HAP-1 (cell line): ENCODE measurements at regions of chr1 and their contacts with region 1.

Region 1: GRCh38 chr1:156728597-156729462 is at the start of gene ISG20L2:
- DNase-seq: peak; percentile 96 to 97
- H3K4me3 ChIP-seq: peak within 1 kb of the TSS; percentile 82
- H3K4me1 ChIP-seq: peaks cover 14% of the 10 kb centered on the region
- H3K27me3 ChIP-seq: no peaks in the 10 kb centered on the region

Region 2: DNA sequence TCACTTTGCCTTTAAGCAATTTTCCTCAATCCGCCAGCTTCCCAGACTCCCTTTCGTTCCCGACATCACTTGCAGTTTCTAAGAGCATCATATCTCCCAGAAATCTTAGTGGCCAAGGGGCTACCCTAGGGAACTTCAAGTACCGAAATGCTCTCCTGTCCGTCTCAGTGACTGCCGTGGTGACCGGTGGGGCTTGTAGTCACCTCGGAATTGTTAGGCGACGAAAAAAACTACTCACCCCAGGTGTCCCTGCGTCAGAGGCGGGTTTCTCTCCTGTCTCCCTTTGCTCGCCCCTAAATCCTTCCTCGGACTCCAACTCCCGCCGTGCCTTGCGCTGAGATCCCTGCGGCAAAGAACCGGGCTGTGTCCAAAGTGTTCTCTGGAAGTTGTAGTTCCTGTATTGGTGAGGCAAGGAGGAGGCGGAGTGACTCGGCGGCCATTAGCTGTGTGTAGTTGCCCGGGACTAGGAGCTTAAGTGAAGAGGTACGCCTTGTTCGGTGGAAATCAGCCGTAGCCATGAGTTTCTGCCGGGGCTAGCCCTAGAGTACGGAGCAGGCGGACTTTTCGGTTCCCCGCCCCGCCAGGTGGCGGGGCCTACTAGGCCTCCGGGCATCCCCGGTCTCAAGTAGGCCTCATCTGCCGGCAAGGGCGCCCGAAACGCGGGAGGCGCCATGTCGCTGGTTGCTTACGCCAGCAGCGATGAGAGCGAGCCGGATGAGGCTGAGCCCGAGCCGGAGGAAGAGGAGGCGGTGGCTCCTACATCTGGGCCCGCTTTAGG is 38.5 kb after region 1 on chr1 and contains the start of gene PRCC:
- in situ Hi-C with region 1: loop called (anchors 5 kb)
- DNase-seq: peak; percentile 98 to 100
- H3K4me3 ChIP-seq: peak within 1 kb of the TSS; percentile 81
- H3K4me1 ChIP-seq: peaks cover 4% of the 10 kb centered on the region; the same call in 1 of the 2 replicates
- H3K27me3 ChIP-seq: no peaks in the 10 kb centered on the region

Region 3: DNA sequence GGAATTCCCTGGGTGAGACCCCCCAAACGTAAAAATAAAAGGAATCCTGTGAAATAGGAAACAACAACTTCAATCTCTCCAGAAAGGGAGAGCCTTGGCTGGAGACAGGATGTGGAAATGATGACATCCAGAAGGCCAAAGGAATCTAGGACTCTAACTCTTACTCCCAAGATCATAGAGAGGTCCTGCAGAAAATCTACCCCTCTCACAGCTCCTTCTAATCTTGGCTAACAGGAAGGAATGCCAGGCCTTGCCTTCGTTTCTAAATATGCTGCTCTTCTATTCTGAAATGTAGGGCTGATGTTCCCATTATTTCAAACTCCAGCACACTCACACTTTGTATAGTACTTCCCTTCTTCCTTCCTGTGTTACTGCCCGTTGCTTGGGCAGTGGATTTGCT is 276.0 kb after region 1 on chr1:
- in situ Hi-C with region 1: no loop called
- DNase-seq: no peak
- H3K4me3 ChIP-seq: no peak overlapping the region
- H3K4me1 ChIP-seq: no peaks in the 10 kb centered on the region
- H3K27me3 ChIP-seq: no peaks in the 10 kb centered on the region